ENCODE measurements at regions of chr6 and their contacts with region 1.

Region 1: DNA sequence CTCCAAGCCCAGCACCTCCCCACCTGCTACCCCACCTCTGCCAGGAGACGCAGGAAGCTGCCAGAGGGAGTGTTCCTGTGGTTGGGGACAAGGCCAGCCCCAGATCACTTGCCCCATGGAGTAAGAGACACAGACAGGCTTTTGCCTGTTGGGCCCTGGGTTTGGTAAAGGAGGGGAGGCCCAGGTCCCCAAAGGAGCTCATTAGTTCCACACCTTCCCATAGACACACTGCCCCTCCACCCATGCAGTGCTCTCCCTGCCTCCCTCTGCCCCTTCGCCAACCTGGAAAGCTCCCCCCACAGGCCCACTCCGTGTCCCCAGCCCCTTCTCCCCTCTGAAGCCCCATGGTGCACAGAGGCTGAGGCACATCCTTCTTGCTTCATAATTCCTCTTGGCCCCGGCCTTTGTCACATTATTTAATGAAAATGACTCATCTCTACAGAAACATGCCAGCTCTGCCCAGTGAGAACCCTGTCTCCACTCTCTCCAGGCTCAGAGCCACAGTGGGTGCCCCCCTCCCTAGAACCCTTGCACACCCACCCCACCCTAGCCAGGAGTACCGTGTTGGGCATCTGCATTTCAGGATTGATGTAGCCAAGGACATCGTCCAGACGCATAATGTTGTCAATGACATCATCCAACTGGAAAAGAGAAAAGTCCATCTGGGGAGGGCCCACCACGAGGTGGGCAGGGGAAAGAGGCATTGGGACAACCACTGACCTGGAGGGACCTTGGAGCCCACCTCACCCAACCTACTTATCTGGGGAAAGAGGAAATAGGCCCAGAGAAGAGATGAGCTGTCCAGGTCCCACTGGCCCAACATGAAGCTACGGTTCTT is 46.0 kb downstream of the TFEB start:
- DNase-seq: no peak
- ATAC-seq: no peak; a peak in 1 of 6 replicates
- H3K4me3 ChIP-seq: no peak overlapping the region
- H3K27ac ChIP-seq: no peak overlapping the region
- H3K4me1 ChIP-seq: peaks cover 4% of the 10 kb centered on the region; the same call in 1 of the 3 replicates
- CTCF ChIP-seq: no peak
- EP300 ChIP-seq: no peak
- POLR2A ChIP-seq: no peak
- RAD21 ChIP-seq: no peak

Region 2: GRCh38 chr6:40922281-40922680 is 767.1 kb before region 1 on chr6:
- CTCF ChIA-PET with region 1: no interaction called
- POLR2A ChIA-PET with region 1: no interaction called
- DNase-seq: no peak
- ATAC-seq: no peak
- H3K4me3 ChIP-seq: no peak overlapping the region
- H3K27ac ChIP-seq: 0 out of 6 replicates have a peak overlapping the region, but pooled peaks of 1 of the 2 experiments have one; percentile 17
- H3K4me1 ChIP-seq: 0 out of 3 replicates have a peak, but pooled peaks cover 6% of the 10 kb centered on the region
- CTCF ChIP-seq: no peak
- EP300 ChIP-seq: no peak
- POLR2A ChIP-seq: no peak
- RAD21 ChIP-seq: no peak

Region 3: GRCh38 chr6:41488433-41489119 is 200.8 kb before region 1 on chr6:
- CTCF ChIA-PET with region 1: no interaction called
- POLR2A ChIA-PET with region 1: no interaction called
- DNase-seq: no peak
- ATAC-seq: no peak; a peak in 2 of 6 replicates
- H3K4me3 ChIP-seq: no peak overlapping the region
- H3K27ac ChIP-seq: 0 out of 6 replicates have a peak overlapping the region, but pooled peaks of 1 of the 2 experiments have one; percentile 39
- H3K4me1 ChIP-seq: no peaks in the 10 kb centered on the region
- CTCF ChIP-seq: no peak
- EP300 ChIP-seq: no peak
- POLR2A ChIP-seq: no peak
- RAD21 ChIP-seq: no peak

Region 4: DNA sequence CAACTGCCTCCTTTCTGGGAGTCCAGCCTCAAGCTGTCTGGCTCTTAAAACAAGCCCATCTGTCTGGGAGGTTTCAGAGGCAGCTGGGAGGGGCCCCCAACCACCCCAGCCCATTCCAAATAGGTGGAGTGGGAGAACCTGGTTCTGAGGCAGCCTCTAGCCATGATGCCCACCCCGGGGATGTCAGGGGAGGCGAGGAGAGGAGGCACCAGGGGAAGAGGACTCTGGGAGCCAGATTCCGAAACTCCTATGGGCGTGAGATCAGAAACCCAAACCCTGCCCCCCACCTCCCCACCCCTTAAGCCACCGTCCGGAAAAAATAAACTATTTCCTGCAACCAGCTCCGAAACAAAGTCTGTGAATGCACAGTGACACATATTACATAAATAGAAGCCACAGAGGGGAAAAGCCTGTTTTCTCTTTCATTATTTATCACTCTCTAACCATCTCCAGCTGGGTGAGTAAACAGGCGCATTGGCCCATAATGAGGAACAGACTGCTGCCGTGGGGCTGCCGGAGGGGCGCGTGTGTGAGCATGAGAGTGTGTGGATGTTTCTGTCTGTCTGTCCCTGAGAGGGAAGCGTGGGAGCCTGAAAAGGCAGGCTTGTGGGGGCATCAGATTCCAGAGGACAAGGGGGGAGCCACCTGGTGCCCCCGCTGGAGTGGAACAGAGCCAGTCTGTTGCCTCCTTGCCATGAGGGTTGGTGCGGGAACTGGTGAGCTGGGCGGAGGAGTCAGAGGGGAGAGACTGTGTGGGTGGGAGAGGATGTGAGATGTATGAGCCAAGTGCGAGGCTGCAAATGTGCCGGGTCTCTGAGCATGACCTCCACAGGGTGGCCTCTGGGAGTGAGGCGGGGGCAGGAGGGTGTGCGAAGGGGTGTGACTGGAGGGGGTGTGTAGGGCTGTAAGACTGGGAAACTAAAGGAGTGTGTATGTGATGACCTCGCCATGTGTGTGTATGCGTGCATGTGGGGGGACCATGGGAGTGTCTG is 157.5 kb before region 1 on chr6:
- CTCF ChIA-PET with region 1: no interaction called
- POLR2A ChIA-PET with region 1: no interaction called
- DNase-seq: no peak
- ATAC-seq: no peak
- H3K4me3 ChIP-seq: no peak overlapping the region
- H3K27ac ChIP-seq: no peak overlapping the region
- H3K4me1 ChIP-seq: peaks cover 6% of the 10 kb centered on the region; the same call in 1 of the 3 replicates
- CTCF ChIP-seq: no peak
- EP300 ChIP-seq: no peak
- POLR2A ChIP-seq: no peak
- RAD21 ChIP-seq: no peak

Region 5: DNA sequence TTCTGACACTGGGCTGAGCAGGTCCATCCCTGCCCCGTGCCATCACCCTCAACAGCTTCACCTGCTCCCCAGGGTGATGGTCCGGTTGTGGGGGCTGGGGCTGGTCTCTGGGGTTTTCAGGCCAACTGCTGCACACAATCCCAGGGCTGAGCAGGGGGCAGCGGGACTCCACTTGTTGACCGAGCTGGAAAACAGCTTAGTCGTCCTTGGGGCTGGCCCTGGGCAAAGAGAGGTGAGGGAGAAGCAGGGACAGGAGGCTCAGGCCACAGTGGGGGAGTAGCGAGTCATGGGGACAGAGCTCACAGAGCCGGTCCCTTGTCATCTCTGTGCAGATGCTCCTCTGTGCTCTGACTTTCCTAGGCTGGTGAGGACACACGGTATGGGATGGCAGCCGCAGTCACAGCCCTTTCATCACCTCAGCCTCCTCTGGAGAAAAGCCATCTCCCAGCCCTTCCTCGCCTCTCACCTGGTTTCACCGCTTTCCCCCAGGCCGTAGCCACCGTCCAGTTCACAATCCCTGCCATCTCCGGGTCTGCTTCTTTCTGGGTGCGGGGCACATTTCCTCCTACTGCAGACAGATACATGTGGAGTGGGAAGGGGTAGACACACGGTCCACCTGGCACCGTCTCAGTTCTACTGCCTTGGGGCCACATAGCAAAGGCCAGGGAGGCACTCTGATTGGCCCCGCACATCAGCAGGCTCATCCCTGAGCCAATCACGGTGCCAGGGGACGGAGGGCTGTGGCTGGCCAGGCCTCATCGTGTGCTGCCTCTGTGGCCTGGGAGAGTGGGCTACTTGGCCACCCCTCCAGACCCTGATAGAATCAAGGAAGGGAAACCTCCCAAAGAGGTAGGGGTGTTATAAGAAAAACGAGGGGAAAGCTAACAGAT is 32.0 kb before region 1 on chr6:
- CTCF ChIA-PET with region 1: no interaction called
- POLR2A ChIA-PET with region 1: no interaction called
- DNase-seq: no peak
- ATAC-seq: no peak
- H3K4me3 ChIP-seq: no peak overlapping the region
- H3K27ac ChIP-seq: no peak overlapping the region
- H3K4me1 ChIP-seq: no peaks in the 10 kb centered on the region
- CTCF ChIP-seq: no peak
- EP300 ChIP-seq: no peak
- POLR2A ChIP-seq: no peak
- RAD21 ChIP-seq: no peak

Region 6: DNA sequence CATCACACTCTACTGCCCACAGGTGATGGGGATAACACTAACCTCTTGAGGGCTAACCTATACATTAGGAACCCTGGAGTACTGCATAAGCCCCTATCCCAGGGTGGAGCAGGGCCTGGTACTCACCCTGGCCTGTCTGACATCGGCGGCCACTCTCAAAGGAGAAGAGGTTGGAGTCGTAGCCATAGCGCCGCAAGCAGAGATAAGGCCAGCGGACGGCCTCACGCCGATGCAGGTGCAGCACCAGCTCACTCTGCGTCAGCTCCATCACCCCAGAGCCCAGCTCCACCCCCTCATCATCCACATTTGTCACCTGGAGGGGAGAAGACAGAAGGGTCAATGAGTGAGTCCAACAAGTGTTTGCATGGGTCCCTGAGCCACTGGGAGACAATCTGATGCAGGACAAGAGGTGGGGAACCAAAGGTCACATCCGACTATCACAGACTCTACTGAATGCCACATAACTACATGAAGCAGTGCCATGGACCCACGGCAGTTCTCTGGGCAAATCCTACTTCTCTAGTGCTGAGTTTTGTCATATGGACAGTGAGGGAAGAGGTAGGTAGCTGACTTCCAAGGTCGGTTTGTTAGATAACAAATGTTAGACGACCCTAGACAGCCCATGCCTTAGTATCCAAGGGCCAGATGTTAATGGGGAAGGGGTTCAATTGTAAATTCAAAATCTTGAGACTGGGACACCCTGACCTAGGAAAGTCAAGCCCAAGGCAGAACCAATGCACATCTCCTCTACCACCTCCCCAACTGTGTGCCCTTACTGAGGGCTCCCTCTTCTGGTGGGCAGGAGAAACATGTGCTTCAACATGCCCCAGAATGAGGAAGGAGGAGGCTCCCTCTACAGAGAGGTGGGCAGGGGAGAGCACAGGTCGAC is 86.1 kb after region 1 on chr6:
- CTCF ChIA-PET with region 1: interaction called, 18 read pairs
- POLR2A ChIA-PET with region 1: no interaction called
- DNase-seq: peak; percentile 74 to 82
- ATAC-seq: peak; percentile 52 to 74; a peak in 5 of 6 replicates
- H3K4me3 ChIP-seq: no peak overlapping the region
- H3K27ac ChIP-seq: no peak overlapping the region
- H3K4me1 ChIP-seq: peaks cover 7% of the 10 kb centered on the region; the same call in 2 of the 3 replicates
- CTCF ChIP-seq: peak; percentile 66
- EP300 ChIP-seq: no peak
- POLR2A ChIP-seq: no peak
- RAD21 ChIP-seq: peak; percentile 70 to 84

Measured in A549 (cell line).